HEK293 (cell line): ENCODE measurements at regions of chr17 and their contacts with region 1.

Region 1: GRCh38 chr17:41665566-41666236 is 23.0 kb upstream of the EIF1 start:
- H3K4me3 ChIP-seq: peak overlapping the region; percentile 25
- H3K27ac ChIP-seq: peak overlapping the region; percentile 45; the same call in 1 of the 2 replicates
- H3K4me1 ChIP-seq: peaks cover 3% of the 10 kb centered on the region
- CTCF ChIP-seq: peak; percentile 98

Region 2: GRCh38 chr17:40615295-40615988 is 1050.3 kb before region 1 on chr17:
- CTCF ChIA-PET with region 1: interaction called, 16 read pairs
- POLR2A ChIA-PET with region 1: no interaction called
- H3K4me3 ChIP-seq: no peak overlapping the region
- H3K27ac ChIP-seq: no peak overlapping the region
- H3K4me1 ChIP-seq: no peaks in the 10 kb centered on the region
- CTCF ChIP-seq: peak; percentile 86

Region 3: DNA sequence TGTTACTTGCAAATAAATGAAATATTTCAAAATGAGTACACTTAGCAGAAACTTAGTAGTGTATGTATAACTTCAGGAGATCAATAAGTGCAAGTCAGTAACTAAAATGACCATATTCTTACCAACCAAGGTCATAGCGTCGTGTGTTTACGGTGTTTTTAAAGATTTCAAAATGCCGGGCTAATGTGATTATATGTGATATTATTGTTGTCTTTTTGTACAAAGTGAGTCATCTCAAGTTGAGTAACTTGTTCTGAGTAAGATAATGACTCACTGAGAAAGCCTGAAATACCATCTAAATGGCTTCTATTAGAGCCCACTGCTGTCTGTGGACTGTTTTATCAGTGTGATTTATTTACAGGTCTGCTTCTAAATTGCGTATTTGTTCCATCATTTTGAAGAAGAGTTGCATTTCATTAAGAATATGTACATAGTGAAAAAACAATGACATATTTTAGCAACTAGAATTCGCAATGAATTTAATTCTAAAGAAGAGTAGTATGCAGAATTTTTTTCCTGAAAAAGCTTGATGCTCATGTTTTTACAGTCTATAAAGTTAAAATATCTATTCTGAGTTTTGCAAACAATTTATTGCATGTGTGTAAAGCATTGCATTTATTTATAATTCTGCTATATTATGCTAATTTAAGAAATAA is 811.4 kb before region 1 on chr17:
- CTCF ChIA-PET with region 1: interaction called, 109 read pairs
- POLR2A ChIA-PET with region 1: interaction called, 3 read pairs
- H3K4me3 ChIP-seq: no peak overlapping the region
- H3K27ac ChIP-seq: no peak overlapping the region
- H3K4me1 ChIP-seq: peaks cover 5% of the 10 kb centered on the region
- CTCF ChIP-seq: no peak

Region 4: DNA sequence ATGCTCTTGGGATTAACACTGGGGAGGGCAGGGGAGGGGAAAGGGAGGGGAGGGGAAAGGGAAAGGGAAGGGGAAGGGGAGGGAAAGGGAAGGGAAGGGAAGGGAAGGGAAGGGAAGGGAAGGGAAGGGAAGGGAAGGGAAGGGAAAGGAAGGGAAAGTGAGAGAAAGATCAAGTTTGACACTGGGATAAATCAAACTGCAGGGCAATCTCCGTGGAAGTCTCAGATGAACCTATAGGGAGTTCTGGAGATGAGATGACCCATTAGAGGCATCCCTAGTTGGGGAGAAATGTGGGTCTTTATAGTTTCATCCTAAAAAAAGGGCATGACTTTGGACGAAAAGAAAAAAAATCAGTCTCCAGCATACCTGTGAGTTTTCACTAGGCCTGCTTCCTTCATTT is 544.0 kb before region 1 on chr17:
- CTCF ChIA-PET with region 1: no interaction called
- POLR2A ChIA-PET with region 1: no interaction called
- H3K4me3 ChIP-seq: no peak overlapping the region
- H3K27ac ChIP-seq: no peak overlapping the region
- H3K4me1 ChIP-seq: no peaks in the 10 kb centered on the region
- CTCF ChIP-seq: no peak

Region 5: DNA sequence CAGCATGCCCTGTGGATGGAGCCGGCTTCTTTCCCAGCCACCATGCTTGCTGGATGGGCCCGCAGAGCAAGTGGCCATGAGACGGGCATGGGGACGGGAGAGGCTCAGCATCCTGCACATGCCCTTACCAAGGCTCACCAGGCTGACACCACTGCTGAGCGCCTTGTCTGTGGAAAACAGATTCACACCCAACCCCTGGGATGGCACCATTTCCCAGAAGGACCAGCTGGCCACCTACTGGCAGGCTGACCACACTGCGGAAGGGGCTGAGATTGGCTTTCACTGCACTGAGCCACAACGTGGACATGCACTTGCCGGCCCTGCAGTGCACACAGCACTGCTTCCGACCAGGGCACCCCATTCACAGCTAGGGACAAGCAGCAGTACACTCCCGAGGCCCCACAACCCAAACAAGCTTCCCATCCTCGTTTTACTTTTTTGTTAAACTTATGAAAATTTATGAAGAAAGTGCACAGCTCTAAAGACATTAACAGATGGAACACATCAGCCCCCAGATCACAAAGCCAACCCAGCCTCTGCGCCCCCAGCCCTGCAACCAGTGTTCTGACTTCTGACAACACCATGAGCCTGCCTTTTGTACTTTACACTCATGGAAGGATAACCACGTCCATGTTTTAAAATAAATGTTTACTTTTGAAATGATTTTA is 336.3 kb before region 1 on chr17:
- CTCF ChIA-PET with region 1: interaction called, 14 read pairs
- POLR2A ChIA-PET with region 1: no interaction called
- H3K4me3 ChIP-seq: no peak overlapping the region
- H3K27ac ChIP-seq: no peak overlapping the region
- H3K4me1 ChIP-seq: no peaks in the 10 kb centered on the region
- CTCF ChIP-seq: peak; percentile 82

Region 6: GRCh38 chr17:41530062-41531051 is 135.3 kb before region 1 on chr17:
- CTCF ChIA-PET with region 1: interaction called, 31 read pairs
- POLR2A ChIA-PET with region 1: interaction called, 5 read pairs
- H3K4me3 ChIP-seq: no peak overlapping the region
- H3K27ac ChIP-seq: peak overlapping the region; percentile 32
- H3K4me1 ChIP-seq: peaks cover 14% of the 10 kb centered on the region
- CTCF ChIP-seq: no peak

Region 7: DNA sequence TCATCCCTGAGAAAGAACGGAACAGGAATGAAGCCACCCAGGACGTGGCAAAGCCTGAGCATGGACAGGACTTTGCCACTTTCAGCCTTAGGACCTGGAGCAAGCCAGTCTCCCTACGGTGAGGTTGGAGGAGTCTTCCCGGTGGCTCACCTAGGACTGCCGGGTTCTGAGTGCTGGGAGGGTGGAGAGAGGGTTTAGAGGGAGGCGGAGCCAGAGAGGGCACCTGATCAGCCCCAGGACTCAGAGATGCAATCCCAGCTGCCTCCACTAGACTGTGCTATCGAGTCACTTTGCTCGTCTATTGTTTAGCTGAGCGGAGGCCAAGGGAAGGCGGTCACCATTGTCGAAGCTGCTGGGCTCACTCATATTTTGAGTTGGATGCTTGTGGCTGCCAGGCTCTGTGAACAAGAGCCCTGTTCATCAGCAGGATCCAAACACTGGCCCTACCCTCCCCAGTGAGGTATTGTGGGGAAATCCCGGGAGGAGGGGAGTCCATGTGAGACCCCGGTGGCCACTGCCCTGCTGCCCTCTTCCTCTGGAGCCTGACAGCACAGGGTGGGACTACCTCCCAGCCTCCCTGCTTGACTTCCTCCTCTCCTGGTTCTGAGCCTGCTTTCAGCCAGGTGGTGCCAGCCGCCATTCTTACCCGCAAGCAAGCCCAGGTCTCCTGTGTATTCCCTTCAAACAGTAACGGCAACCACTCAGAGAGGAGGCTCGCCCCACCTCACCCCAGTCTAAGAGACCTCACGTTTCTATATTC is 86.0 kb before region 1 on chr17:
- CTCF ChIA-PET with region 1: interaction called, 115 read pairs
- POLR2A ChIA-PET with region 1: no interaction called
- H3K4me3 ChIP-seq: no peak overlapping the region
- H3K27ac ChIP-seq: no peak overlapping the region
- H3K4me1 ChIP-seq: no peaks in the 10 kb centered on the region; the same call in 1 of the 2 replicates
- CTCF ChIP-seq: peak; percentile 89

Region 8: GRCh38 chr17:41678907-41679739 is 13.4 kb after region 1 on chr17:
- CTCF ChIA-PET with region 1: interaction called, 126 read pairs
- POLR2A ChIA-PET with region 1: interaction called, 7 read pairs
- H3K4me3 ChIP-seq: no peak overlapping the region
- H3K27ac ChIP-seq: no peak overlapping the region
- H3K4me1 ChIP-seq: no peaks in the 10 kb centered on the region
- CTCF ChIP-seq: 0 out of 2 replicates have a peak, but pooled peaks have one; percentile 21